K562 (cell line): ENCODE measurements at regions of chrX and their contacts with region 1.

Region 1: DNA sequence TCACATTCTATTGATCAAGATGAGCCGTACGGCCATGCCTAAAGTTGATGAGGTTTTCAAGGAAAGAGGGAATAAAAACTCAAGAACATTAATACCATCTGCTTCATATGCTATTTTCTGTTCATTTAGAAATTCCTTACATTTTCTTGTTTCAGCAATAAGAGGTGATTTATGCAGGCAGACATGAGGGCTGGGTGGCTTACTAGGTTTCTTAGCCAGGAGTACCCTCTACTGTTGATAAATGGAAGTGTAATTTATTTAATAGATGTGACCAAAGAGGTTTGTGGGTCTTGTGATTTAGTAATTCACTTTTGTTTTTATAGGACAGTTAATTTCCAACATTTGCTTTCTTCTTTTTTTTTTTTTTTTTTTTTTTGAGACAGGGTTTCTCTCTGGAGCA is 6.4 kb upstream of the SMIM9 start:
- DNase-seq: peak; percentile 58 to 75 (median 64)
- ATAC-seq: peak; percentile 91
- H3K4me3 ChIP-seq: no peak overlapping the region
- H3K27ac ChIP-seq: no peak overlapping the region
- H3K4me1 ChIP-seq: peaks cover 3 to 6% of the 10 kb centered on the region in 2 experiments; a peak in 2 of 5 replicates
- H3K27me3 ChIP-seq: no peaks in the 10 kb centered on the region
- CTCF ChIP-seq: peak; percentile 57 to 80 (median 57); a peak in 5 of 6 replicates
- EP300 ChIP-seq: no peak
- POLR2A ChIP-seq: no peak
- RAD21 ChIP-seq: peak; percentile 83 to 94

Region 2: DNA sequence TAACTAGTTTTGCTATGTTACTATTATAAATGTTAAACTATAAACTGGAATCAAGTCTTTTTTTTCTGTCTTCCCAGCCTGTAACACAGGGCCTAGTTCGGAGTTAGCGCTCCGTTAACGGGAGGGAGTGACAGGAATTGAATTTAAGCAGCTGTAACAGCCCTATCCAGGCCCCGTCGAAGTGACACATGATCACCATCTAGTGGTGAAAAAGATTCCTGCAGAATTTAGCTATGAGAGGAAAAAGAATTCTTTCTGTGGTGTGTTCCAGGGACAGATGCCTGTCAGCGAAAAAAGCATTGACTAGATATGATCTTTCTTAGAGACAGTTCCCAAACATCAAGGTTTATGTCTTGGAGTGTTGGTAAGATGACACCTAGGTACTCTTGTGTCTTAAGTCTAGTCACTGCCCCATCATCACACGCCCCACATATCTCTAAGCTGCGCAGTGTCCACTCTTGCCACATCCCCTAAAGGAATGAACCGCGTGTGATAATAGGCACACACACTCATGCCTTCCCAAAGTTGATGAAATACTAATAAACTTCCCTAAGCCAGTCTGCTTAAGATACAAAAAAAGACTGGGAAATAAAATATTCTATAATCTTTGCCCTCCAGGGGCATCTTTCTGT is 92.0 kb before region 1 on chrX:
- CTCF ChIA-PET with region 1: no interaction called
- POLR2A ChIA-PET with region 1: no interaction called
- in situ Hi-C with region 1: no loop called
- intact Hi-C with region 1: loop called (anchors 5 kb)
- DNase-seq: peak; percentile 61 to 85 (median 68)
- ATAC-seq: peak; percentile 74
- H3K4me3 ChIP-seq: peak overlapping the region; percentile 69; the same call in 1 of the 2 replicates
- H3K27ac ChIP-seq: peak overlapping the region; percentile 34
- H3K4me1 ChIP-seq: peaks cover 20 to 29% of the 10 kb centered on the region in 2 experiments; a peak in 3 of 5 replicates
- H3K27me3 ChIP-seq: no peaks in the 10 kb centered on the region
- CTCF ChIP-seq: peak; percentile 68 to 84 (median 81)
- EP300 ChIP-seq: no peak
- POLR2A ChIP-seq: no peak
- RAD21 ChIP-seq: peak; percentile 77 to 87

Region 3: GRCh38 chrX:154775419-154776349 is 65.2 kb before region 1 on chrX:
- CTCF ChIA-PET with region 1: no interaction called
- POLR2A ChIA-PET with region 1: interaction called, 9 read pairs
- in situ Hi-C with region 1: no loop called
- intact Hi-C with region 1: loop called (anchors 2 kb)
- DNase-seq: peak in 2 of 4 experiments; percentile 29 to 67
- ATAC-seq: peak; percentile 70
- H3K4me3 ChIP-seq: no peak overlapping the region
- H3K27ac ChIP-seq: 0 out of 3 replicates have a peak overlapping the region, but pooled peaks have one; percentile 48
- H3K4me1 ChIP-seq: peaks cover 0 to 12% of the 10 kb centered on the region in 2 experiments; a peak in 3 of 5 replicates
- H3K27me3 ChIP-seq: no peaks in the 10 kb centered on the region
- CTCF ChIP-seq: no peak
- EP300 ChIP-seq: no peak
- POLR2A ChIP-seq: peak; percentile 44
- RAD21 ChIP-seq: no peak

Region 4: GRCh38 chrX:154799554-154800348 is 41.1 kb before region 1 on chrX:
- CTCF ChIA-PET with region 1: interaction called, 3 read pairs
- POLR2A ChIA-PET with region 1: no interaction called
- in situ Hi-C with region 1: no loop called
- intact Hi-C with region 1: loop called (anchors 2 kb)
- DNase-seq: peak in 1 of 4 experiments; percentile 32
- ATAC-seq: peak; percentile 32; the same call in 1 of the 3 replicates
- H3K4me3 ChIP-seq: peak overlapping the region; percentile 89
- H3K27ac ChIP-seq: peak overlapping the region; percentile 100
- H3K4me1 ChIP-seq: peaks cover 22 to 44% of the 10 kb centered on the region in 2 experiments
- H3K27me3 ChIP-seq: no peaks in the 10 kb centered on the region
- CTCF ChIP-seq: no peak
- EP300 ChIP-seq: no peak
- POLR2A ChIP-seq: peak; percentile 49
- RAD21 ChIP-seq: no peak

Region 5: GRCh38 chrX:154804957-154805695 is 35.7 kb before region 1 on chrX and contains the start of gene MPP1:
- CTCF ChIA-PET with region 1: interaction called, 3 read pairs
- POLR2A ChIA-PET with region 1: no interaction called
- in situ Hi-C with region 1: no loop called
- intact Hi-C with region 1: loop called (anchors 2 kb)
- DNase-seq: peak; percentile 87 to 92 (median 88)
- ATAC-seq: peak; percentile 88
- H3K4me3 ChIP-seq: peak within 1 kb of the TSS; percentile 89
- H3K27ac ChIP-seq: peak within 1 kb of the TSS; percentile 100
- H3K4me1 ChIP-seq: peaks cover 4 to 14% of the 10 kb centered on the region in 2 experiments
- H3K27me3 ChIP-seq: no peaks in the 10 kb centered on the region
- CTCF ChIP-seq: no peak
- EP300 ChIP-seq: peak; percentile 7; the same call in 1 of the 2 replicates
- POLR2A ChIP-seq: peak; percentile 83
- RAD21 ChIP-seq: no peak; a peak in 1 of 4 replicates
- polyA plus RNA-seq, gene MPP1: 271 to 305 TPM

Region 6: GRCh38 chrX:154986826-154987576 is 146.1 kb after region 1 on chrX:
- CTCF ChIA-PET with region 1: no interaction called
- POLR2A ChIA-PET with region 1: no interaction called
- in situ Hi-C with region 1: no loop called
- intact Hi-C with region 1: no loop called
- DNase-seq: no peak
- ATAC-seq: 0 out of 3 replicates have a peak, but pooled peaks have one; percentile 46
- H3K4me3 ChIP-seq: no peak overlapping the region
- H3K27ac ChIP-seq: no peak overlapping the region
- H3K4me1 ChIP-seq: 0 out of 5 replicates have a peak, but pooled peaks cover 0 to 3% of the 10 kb centered on the region in 2 experiments
- H3K27me3 ChIP-seq: no peaks in the 10 kb centered on the region
- CTCF ChIP-seq: peak in 2 of 3 experiments; percentile 30 to 61; a peak in 3 of 6 replicates
- EP300 ChIP-seq: no peak
- POLR2A ChIP-seq: no peak
- RAD21 ChIP-seq: peak; percentile 68 to 79